ENCODE measurements at regions of chr14 and their contacts with region 1.

Region 1: GRCh38 chr14:104224506-104225277 is 86.3 kb downstream of the KIF26A start:
- DNase-seq: peak in 1 of 2 experiments; percentile 88
- H3K4me3 ChIP-seq: no peak overlapping the region
- H3K27ac ChIP-seq: no peak overlapping the region
- H3K4me1 ChIP-seq: peaks cover 0 to 14% (median 6%) of the 10 kb centered on the region in 4 experiments; a peak in 5 of 7 replicates
- H3K27me3 ChIP-seq: no peaks in the 10 kb centered on the region
- CTCF ChIP-seq: peak; percentile 56 to 64 (median 57)
- EP300 ChIP-seq: no peak
- POLR2A ChIP-seq: no peak
- RAD21 ChIP-seq: peak; percentile 30 to 59

Region 2: DNA sequence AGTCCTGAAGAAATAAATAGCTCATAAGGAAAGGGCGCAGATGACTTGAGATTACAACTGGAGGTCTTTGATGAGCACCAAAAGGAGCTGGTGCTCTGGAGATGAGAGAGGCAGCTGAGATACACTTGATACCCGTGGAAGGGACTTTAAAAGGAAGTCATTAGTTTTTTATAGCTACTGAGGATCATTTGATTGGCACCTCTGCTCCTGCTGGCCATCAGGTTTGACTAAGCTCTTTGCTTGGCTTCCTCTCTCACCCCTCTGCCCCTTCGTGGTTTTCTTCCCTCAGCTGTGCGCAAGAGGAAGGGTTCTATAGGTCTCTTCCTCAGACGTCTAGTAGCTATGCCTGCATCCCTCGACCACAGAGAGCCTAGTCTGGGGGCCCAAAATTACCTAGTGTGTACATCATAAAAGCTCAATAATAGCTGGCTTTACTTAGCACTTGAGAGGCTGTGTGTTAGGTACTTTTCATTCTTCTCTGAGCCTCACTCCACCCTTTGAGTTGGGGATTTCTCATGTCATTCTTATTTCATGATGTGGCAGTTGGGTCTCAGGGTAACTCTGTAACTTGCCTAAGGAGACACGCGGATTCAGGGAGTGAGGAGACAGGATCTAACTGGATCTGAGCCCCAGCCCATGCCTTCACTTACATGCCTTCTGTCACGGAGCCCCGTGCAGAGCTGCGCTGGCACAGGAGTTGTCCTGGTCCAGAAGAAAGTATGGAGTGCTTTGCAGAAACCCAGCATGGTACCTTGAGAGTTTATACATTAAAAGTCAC is 207.6 kb before region 1 on chr14:
- CTCF ChIA-PET with region 1: no interaction called
- POLR2A ChIA-PET with region 1: no interaction called
- DNase-seq: no peak
- H3K4me3 ChIP-seq: no peak overlapping the region
- H3K27ac ChIP-seq: no peak overlapping the region
- H3K4me1 ChIP-seq: no peaks in the 10 kb centered on the region
- H3K27me3 ChIP-seq: no peaks in the 10 kb centered on the region
- CTCF ChIP-seq: no peak
- EP300 ChIP-seq: no peak
- POLR2A ChIP-seq: no peak
- RAD21 ChIP-seq: no peak

Region 3: DNA sequence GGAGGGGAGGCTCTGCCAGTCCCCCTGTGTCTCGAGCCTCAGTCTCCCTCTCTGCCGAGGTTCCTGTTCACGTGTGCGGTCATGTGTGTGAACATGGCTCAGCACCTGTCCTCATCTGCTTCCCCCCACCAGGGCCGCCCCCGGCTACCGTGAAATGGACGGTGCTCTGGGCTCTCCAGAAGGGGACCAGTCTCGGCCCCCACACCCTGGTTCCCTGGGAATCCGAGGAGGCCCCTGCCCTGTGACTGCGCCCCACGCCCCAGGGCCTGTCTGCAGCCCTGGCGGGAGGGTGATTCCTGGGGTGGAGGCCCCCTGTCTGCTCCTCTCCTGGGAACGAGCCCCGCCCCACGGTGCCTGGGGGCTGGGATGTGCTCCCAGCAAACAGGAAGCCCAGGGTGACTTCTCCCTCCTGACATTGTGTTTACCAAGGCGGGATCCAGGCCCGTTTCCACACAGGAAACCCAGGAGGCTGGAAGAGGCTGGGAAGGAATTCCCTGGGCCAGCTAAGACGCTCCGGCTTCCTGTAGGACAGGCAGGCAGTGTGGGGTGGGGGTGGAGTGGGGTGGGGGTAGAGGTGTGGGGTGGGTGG is 39.7 kb before region 1 on chr14:
- CTCF ChIA-PET with region 1: interaction called, 10 read pairs
- POLR2A ChIA-PET with region 1: no interaction called
- DNase-seq: no peak
- H3K4me3 ChIP-seq: no peak overlapping the region
- H3K27ac ChIP-seq: no peak overlapping the region
- H3K4me1 ChIP-seq: no peaks in the 10 kb centered on the region; a peak in 2 of 7 replicates
- H3K27me3 ChIP-seq: no peaks in the 10 kb centered on the region
- CTCF ChIP-seq: no peak
- EP300 ChIP-seq: no peak
- POLR2A ChIP-seq: no peak
- RAD21 ChIP-seq: no peak

Region 4: DNA sequence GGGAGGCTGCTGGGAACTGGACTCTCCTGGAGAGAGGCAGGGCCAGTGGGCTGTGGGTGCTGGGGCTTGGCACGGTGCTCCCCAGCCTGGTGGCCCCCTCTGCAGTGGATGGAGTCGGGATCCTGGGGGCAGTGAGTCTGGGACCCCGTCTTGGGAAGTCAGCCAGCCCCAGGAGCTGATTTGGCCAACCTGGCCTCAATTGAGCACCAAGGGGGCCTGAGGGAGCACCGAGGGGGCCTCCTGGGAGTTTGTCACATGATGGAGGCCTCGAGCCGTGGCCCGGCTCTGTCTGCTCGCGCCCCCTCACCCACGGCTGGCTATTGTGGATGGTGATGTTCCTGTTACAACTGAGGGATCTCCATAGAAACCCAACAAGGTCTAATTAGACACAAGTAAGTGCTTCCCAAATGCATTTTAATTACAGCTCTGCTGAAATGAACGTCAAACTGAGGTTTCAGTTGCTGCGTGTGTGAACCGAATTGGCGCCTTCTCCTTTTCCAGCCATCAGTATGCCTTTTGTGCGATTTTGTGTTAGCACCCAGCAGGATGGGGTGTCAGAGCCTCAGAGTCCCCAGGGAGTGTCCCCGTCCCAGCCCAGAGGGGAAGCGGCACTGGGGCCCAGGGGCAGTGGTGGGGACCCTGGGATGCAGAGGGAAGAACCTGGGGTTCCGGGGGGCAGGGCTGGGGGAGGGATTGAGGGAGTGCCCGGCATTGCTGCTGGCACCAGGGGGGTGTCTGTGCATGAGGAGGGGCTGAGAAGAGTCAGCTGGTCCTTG is 14.5 kb before region 1 on chr14:
- CTCF ChIA-PET with region 1: interaction called, 14 read pairs
- POLR2A ChIA-PET with region 1: interaction called, 4 read pairs
- DNase-seq: no peak
- H3K4me3 ChIP-seq: no peak overlapping the region
- H3K27ac ChIP-seq: no peak overlapping the region
- H3K4me1 ChIP-seq: peaks cover 0 to 7% (median 0%) of the 10 kb centered on the region in 4 experiments; a peak in 1 of 7 replicates
- H3K27me3 ChIP-seq: no peaks in the 10 kb centered on the region
- CTCF ChIP-seq: no peak
- EP300 ChIP-seq: no peak
- POLR2A ChIP-seq: no peak
- RAD21 ChIP-seq: no peak

Region 5: GRCh38 chr14:104240434-104241157 is 15.9 kb after region 1 on chr14:
- CTCF ChIA-PET with region 1: interaction called, 14 read pairs
- POLR2A ChIA-PET with region 1: interaction called, 5 read pairs
- DNase-seq: peak in 1 of 2 experiments; percentile 43
- H3K4me3 ChIP-seq: no peak overlapping the region
- H3K27ac ChIP-seq: no peak overlapping the region
- H3K4me1 ChIP-seq: peaks cover 0 to 6% (median 4%) of the 10 kb centered on the region in 4 experiments; a peak in 5 of 7 replicates
- H3K27me3 ChIP-seq: no peaks in the 10 kb centered on the region
- CTCF ChIP-seq: no peak
- EP300 ChIP-seq: peak in 1 of 2 experiments; percentile 47; a peak in 1 of 3 replicates
- POLR2A ChIP-seq: no peak
- RAD21 ChIP-seq: no peak

Measured in H1 (cell line).